K562 (cell line): ENCODE measurements at regions of chr15 and their contacts with region 1.

Region 1: DNA sequence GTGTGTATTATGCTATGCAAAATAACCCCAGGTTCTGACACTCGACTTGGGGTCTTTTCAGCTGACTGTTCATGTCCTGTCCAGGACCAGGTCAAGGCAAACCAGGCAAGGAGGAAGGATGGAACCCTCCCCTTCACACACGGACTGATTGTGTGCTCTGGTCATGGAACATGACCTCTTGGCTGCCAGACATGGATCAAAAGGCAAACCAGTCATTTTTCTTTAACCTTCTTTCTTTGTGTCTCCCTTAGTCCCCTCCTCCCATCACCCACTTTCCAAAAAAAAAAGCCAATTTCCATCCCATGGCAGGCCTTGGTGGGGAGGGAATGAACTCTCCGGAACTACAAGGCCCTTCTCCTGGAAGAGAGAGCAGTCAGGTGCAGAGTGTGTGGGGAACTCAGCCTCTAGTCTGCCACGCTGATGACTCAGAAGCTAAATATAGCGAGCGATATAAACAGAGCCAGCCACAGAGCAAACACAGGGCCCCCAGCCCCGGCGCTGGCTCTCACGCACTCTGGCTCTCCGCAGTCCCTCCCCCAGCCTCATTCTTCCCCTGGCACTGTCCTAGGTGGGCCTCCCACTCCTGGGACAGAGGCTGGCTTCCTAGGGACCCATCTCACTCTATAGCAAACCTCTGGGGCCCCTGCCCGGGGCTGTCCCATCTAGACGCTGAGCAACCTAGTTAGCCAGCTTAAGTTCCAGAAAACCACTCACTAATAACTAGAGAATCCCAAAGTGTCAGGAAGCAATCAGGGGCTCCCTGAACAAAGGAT is 10.0 kb downstream of the BMF start:
- DNase-seq: peak; percentile 62 to 89 (median 77)
- ATAC-seq: peak; percentile 93
- H3K4me3 ChIP-seq: peak overlapping the region; percentile 9; the same call in 1 of the 2 replicates
- H3K27ac ChIP-seq: peak overlapping the region; percentile 78
- H3K4me1 ChIP-seq: peaks cover 37 to 60% of the 10 kb centered on the region in 2 experiments
- H3K27me3 ChIP-seq: no peaks in the 10 kb centered on the region
- CTCF ChIP-seq: no peak
- EP300 ChIP-seq: peak; percentile 76
- POLR2A ChIP-seq: 0 out of 2 replicates have a peak, but pooled peaks have one; percentile 41
- RAD21 ChIP-seq: 0 out of 4 replicates have a peak, but pooled peaks of 1 of the 2 experiments have one; percentile 11

Region 2: GRCh38 chr15:39782441-39783138 is 316.1 kb before region 1 on chr15 and contains the start of gene FSIP1:
- CTCF ChIA-PET with region 1: no interaction called
- POLR2A ChIA-PET with region 1: no interaction called
- in situ Hi-C with region 1: no loop called
- intact Hi-C with region 1: no loop called
- DNase-seq: peak; percentile 97 to 98 (median 98)
- ATAC-seq: peak; percentile 99
- H3K4me3 ChIP-seq: peak within 1 kb of the TSS; percentile 78
- H3K27ac ChIP-seq: peak within 1 kb of the TSS; percentile 74
- H3K4me1 ChIP-seq: peaks cover 0 to 8% of the 10 kb centered on the region in 2 experiments; a peak in 3 of 5 replicates
- H3K27me3 ChIP-seq: no peaks in the 10 kb centered on the region
- CTCF ChIP-seq: peak in 1 of 3 experiments; percentile 30; a peak in 1 of 6 replicates
- EP300 ChIP-seq: no peak
- POLR2A ChIP-seq: peak; percentile 76
- RAD21 ChIP-seq: no peak
- polyA plus RNA-seq, gene FSIP1: 0.07 to 0.20 TPM

Region 3: DNA sequence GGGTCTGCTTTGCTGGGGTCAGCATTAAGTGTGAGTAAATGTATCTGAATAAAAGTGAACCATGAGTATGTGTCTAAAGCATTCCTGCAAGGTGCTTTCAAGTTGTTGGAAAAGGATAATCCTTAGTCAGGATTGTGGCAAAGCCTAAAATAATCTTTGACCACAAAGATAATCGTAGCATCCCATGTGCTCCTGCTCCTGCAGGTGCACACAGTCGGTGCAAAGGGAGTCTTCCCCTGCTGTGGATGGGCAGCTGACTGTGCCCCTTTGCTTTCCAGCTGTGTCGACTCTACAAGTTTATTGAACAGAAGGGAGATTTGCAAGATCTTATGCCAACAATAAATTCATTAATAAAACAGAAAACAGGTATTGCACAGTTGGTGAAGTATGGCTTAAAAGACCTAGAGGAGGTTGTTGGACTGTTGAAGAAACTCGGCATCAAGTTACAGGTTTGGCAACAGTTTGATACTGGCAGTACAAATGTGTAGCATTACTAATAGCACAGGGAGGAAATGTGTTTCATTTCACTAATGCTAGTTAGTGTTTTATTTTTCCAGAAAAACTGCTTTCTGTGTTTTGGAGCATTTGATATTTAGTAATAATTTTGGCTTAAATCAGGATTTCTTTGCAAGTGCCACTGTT is 82.3 kb before region 1 on chr15:
- CTCF ChIA-PET with region 1: no interaction called
- POLR2A ChIA-PET with region 1: no interaction called
- in situ Hi-C with region 1: no loop called
- intact Hi-C with region 1: no loop called
- DNase-seq: no peak
- ATAC-seq: no peak
- H3K4me3 ChIP-seq: no peak overlapping the region
- H3K27ac ChIP-seq: no peak overlapping the region
- H3K4me1 ChIP-seq: no peaks in the 10 kb centered on the region
- H3K27me3 ChIP-seq: no peaks in the 10 kb centered on the region
- CTCF ChIP-seq: no peak
- EP300 ChIP-seq: no peak
- POLR2A ChIP-seq: no peak
- RAD21 ChIP-seq: no peak

Region 4: GRCh38 chr15:40087991-40088928 is 10.4 kb before region 1 on chr15:
- CTCF ChIA-PET with region 1: no interaction called
- POLR2A ChIA-PET with region 1: interaction called, 22 read pairs
- in situ Hi-C with region 1: no loop called
- intact Hi-C with region 1: no loop called
- DNase-seq: no peak
- ATAC-seq: peak; percentile 48
- H3K4me3 ChIP-seq: no peak overlapping the region
- H3K27ac ChIP-seq: no peak overlapping the region
- H3K4me1 ChIP-seq: peaks cover 25 to 36% of the 10 kb centered on the region in 2 experiments
- H3K27me3 ChIP-seq: no peaks in the 10 kb centered on the region
- CTCF ChIP-seq: no peak
- EP300 ChIP-seq: no peak
- POLR2A ChIP-seq: no peak
- RAD21 ChIP-seq: no peak

Region 5: DNA sequence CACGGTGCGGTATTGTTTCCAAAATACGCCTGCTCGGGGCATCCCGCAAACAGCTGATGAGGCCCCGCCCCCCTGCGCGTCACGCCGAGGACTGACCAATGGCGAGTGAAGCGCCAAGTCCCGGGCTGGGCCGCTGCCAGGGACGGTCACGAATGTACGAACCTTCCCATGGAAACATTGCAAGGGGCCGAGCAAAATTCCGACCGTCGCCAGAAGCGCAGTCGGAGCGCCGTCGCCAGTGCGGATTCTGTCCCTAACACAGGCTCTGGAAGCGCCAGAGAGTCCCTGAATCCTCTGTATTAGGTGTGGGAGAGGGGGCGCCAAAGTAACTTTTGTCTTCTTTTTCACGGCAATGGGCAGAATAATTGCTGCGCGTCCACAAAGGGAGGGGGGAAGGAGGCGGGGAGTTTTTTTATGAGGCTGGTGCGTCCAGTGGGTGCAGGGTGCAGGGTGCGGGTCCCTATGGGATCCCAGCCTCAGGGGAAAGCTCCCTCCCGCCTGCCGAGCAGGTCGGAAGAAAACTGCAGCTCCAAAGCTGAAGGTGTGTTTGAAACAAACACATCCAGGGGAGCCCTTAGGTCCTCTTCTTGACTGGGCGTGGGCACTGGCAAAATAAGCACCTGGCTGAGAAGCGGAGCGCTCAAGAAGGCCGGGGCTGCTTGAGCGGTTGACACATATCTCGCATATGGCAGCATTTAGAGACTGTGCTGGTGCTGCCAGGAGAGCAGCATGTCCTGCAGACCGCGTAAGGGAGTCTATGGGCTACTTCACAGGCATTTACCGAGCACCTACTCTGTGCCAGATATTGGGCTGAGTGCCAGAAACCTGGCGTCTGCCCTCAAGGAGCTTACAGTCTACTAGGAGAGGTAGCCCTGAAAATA is 10.4 kb after region 1 on chr15 and contains the start of gene BMF:
- CTCF ChIA-PET with region 1: no interaction called
- POLR2A ChIA-PET with region 1: interaction called, 30 read pairs
- in situ Hi-C with region 1: no loop called
- intact Hi-C with region 1: no loop called
- DNase-seq: peak; percentile 96 to 99 (median 97)
- ATAC-seq: peak; percentile 85
- H3K4me3 ChIP-seq: peak within 1 kb of the TSS; percentile 62
- H3K27ac ChIP-seq: peak within 1 kb of the TSS; percentile 29; the same call in 1 of the 3 replicates
- H3K4me1 ChIP-seq: peaks cover 40 to 45% of the 10 kb centered on the region in 2 experiments
- H3K27me3 ChIP-seq: peaks cover 3% of the 10 kb centered on the region in 2 experiments; a peak in 1 of 5 replicates
- CTCF ChIP-seq: peak; percentile 69 to 79 (median 73)
- EP300 ChIP-seq: peak; percentile 63
- POLR2A ChIP-seq: no peak
- RAD21 ChIP-seq: peak; percentile 45 to 47
- polyA plus RNA-seq, gene BMF: not detected